ENCODE measurements at regions of chr1 and their contacts with region 1.

Region 1: DNA sequence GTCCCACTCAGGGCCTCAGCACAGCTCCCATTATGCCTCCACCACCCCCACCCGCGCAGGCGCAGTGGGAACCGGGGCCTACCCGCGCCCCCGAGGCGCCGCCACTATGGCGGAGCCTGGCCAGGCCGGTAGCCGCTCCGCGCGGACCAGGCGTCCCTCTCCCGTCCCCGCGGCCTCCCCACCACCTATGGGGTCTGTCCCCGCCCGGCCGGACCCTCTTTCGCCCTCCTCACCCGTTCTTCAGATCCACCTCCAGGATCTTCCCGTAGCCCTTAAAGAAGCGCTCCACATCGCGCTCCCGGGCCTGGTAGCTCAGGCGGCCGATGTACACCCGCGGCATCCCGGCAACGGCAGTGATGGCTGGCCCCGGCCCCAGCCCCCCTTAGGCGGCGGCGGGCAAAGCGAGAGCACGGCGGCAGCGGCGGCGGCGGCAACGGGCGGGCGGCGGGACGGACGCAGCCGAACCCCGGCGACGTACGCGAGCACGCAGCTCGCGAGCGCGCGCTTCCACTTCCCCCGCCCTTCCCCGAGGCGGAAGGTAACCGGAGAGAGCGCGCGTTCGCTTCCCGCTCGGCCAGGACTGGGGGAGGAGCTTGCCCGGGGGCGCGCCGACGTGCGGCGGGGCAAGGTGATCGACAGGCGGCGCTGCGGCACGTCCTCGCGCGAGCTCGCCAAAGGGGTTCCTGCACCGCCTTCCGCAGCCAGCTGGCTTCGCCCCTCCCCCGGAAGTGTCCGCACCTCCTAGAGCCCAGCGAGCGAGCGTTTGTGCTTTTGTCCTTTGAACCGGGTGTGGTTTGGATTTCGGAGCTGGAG is at the start of gene SRSF4:
- DNase-seq: peak; percentile 100
- ATAC-seq: peak; percentile 91
- H3K4me3 Mint-ChIP-seq: peak within 1 kb of the TSS; percentile 87
- H3K27ac Mint-ChIP-seq: peak within 1 kb of the TSS; percentile 99
- H3K4me1 Mint-ChIP-seq: peaks cover 39% of the 10 kb centered on the region
- H3K27me3 Mint-ChIP-seq: no peaks in the 10 kb centered on the region
- total RNA-seq, gene SRSF4: 129 to 147 TPM

Region 2: GRCh38 chr1:28581536-28582247 is 599.9 kb before region 1 on chr1:
- CTCF ChIA-PET with region 1: interaction called, 3 read pairs
- POLR2A ChIA-PET with region 1: interaction called, 11 read pairs
- intact Hi-C with region 1: loop called in 1 of 2 experiments (anchors 2 kb)
- DNase-seq: peak; percentile 97
- ATAC-seq: peak; percentile 91
- H3K4me3 Mint-ChIP-seq: peak overlapping the region; percentile 89
- H3K27ac Mint-ChIP-seq: peak overlapping the region; percentile 95
- H3K4me1 Mint-ChIP-seq: peaks cover 33% of the 10 kb centered on the region
- H3K27me3 Mint-ChIP-seq: no peaks in the 10 kb centered on the region

Region 3: DNA sequence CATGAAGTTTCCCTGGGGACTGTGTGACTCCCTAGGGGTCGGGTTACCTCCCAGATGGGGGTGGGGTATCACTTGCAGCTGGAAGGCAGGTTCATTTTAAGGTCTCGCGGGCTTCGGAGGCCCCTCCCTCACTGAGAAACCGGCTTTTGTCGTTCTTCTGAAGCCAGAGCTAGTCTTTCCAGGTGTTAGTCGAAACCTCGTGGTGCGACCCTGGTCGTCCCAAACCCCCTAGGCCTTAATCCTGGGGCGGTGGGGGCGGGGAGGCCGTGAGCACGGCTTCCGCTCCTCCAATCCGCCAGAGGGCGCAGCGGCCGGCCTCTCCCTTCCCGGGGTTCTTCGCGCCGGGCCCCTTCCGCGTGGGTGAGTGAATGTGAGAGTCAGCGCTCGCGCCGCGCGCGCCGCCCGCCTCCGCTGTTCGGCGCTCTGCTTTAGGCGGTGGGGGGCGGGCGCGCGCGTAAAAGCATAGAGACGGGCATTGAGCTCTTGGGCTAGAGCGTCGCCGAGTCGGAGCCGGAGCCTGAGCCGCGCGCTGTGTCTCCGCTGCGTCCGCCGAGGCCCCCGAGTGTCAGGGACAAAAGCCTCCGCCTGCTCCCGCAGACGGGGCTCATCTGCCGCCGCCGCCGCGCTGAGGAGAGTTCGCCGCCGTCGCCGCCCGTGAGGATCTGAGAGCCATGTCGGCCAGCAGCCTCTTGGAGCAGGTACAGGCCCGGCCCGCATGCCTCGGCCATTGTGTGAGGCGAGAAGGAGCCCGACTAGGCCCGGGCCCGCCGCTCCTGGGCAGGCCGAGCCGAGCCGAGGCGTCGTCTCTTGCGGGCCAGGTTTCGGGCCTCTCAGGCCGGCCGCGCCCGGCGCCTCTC is 444.9 kb before region 1 on chr1 and contains the start of gene YTHDF2:
- CTCF ChIA-PET with region 1: interaction called, 7 read pairs
- POLR2A ChIA-PET with region 1: interaction called, 7 read pairs
- intact Hi-C with region 1: loop called in 1 of 2 experiments (anchors 1 kb)
- DNase-seq: peak; percentile 99
- ATAC-seq: peak; percentile 90
- H3K4me3 Mint-ChIP-seq: peak within 1 kb of the TSS; percentile 95
- H3K27ac Mint-ChIP-seq: peak within 1 kb of the TSS; percentile 90
- H3K4me1 Mint-ChIP-seq: peaks cover 31% of the 10 kb centered on the region
- H3K27me3 Mint-ChIP-seq: no peaks in the 10 kb centered on the region
- total RNA-seq, gene YTHDF2: 74.8 to 98.7 TPM

Region 4: GRCh38 chr1:28956038-28956464 is 225.6 kb before region 1 on chr1:
- CTCF ChIA-PET with region 1: no interaction called
- POLR2A ChIA-PET with region 1: no interaction called
- intact Hi-C with region 1: loop called in 1 of 2 experiments (anchors 5 kb)
- DNase-seq: peak; percentile 39
- ATAC-seq: peak; percentile 95
- H3K4me3 Mint-ChIP-seq: no peak overlapping the region
- H3K27ac Mint-ChIP-seq: peak overlapping the region; percentile 32
- H3K4me1 Mint-ChIP-seq: peaks cover 47% of the 10 kb centered on the region
- H3K27me3 Mint-ChIP-seq: no peaks in the 10 kb centered on the region

Region 5: GRCh38 chr1:29202584-29203340 is 21.1 kb after region 1 on chr1:
- CTCF ChIA-PET with region 1: interaction called, 33 read pairs
- POLR2A ChIA-PET with region 1: interaction called, 5 read pairs
- intact Hi-C with region 1: loop called (anchors 1 kb)
- DNase-seq: peak; percentile 96
- ATAC-seq: peak; percentile 95
- H3K4me3 Mint-ChIP-seq: no peak overlapping the region
- H3K27ac Mint-ChIP-seq: no peak overlapping the region
- H3K4me1 Mint-ChIP-seq: peaks cover 6% of the 10 kb centered on the region
- H3K27me3 Mint-ChIP-seq: no peaks in the 10 kb centered on the region

Region 6: GRCh38 chr1:29502911-29503840 is 321.6 kb after region 1 on chr1:
- CTCF ChIA-PET with region 1: no interaction called
- POLR2A ChIA-PET with region 1: no interaction called
- intact Hi-C with region 1: no loop called
- DNase-seq: no peak
- ATAC-seq: no peak
- H3K4me3 Mint-ChIP-seq: no peak overlapping the region
- H3K27ac Mint-ChIP-seq: no peak overlapping the region
- H3K4me1 Mint-ChIP-seq: no peaks in the 10 kb centered on the region
- H3K27me3 Mint-ChIP-seq: peaks cover 27% of the 10 kb centered on the region